CD8-positive, alpha-beta memory T cell (primary cell): ENCODE measurements at regions of chr11 and their contacts with region 1.

Region 1: GRCh38 chr11:119095066-119095880 is 6.4 kb downstream of the DPAGT1 start:
- DNase-seq: peak; percentile 99 to 100 (median 100)
- H3K4me3 ChIP-seq: peak overlapping the region; percentile 88
- H3K4me3 Mint-ChIP-seq: peak overlapping the region; percentile 84 to 97 (median 93)
- H3K27ac ChIP-seq: peak overlapping the region; percentile 84
- H3K27ac Mint-ChIP-seq: peak overlapping the region; percentile 55 to 96 (median 88)
- H3K4me1 ChIP-seq: peaks cover 26% of the 10 kb centered on the region
- H3K4me1 Mint-ChIP-seq: peaks cover 35 to 50% (median 50%) of the 10 kb centered on the region in 3 donors
- H3K27me3 ChIP-seq: no peaks in the 10 kb centered on the region
- H3K27me3 Mint-ChIP-seq: peaks cover 0 to 4% of the 10 kb centered on the region in 2 donors

Region 2: GRCh38 chr11:117907251-117907981 is 1187.9 kb before region 1 on chr11:
- CTCF ChIA-PET with region 1: no interaction called
- POLR2A ChIA-PET with region 1: no interaction called
- DNase-seq: peak; percentile 11 to 67 (median 37)
- H3K4me3 ChIP-seq: peak overlapping the region; percentile 43
- H3K4me3 Mint-ChIP-seq: no peak overlapping the region
- H3K27ac ChIP-seq: peak overlapping the region; percentile 72
- H3K27ac Mint-ChIP-seq: peak overlapping the region in 1 of 8 donors; percentile 75
- H3K4me1 ChIP-seq: no peaks in the 10 kb centered on the region
- H3K4me1 Mint-ChIP-seq: peaks cover 6 to 11% (median 7%) of the 10 kb centered on the region in 3 donors
- H3K27me3 ChIP-seq: no peaks in the 10 kb centered on the region
- H3K27me3 Mint-ChIP-seq: no peaks in the 10 kb centered on the region

Region 3: DNA sequence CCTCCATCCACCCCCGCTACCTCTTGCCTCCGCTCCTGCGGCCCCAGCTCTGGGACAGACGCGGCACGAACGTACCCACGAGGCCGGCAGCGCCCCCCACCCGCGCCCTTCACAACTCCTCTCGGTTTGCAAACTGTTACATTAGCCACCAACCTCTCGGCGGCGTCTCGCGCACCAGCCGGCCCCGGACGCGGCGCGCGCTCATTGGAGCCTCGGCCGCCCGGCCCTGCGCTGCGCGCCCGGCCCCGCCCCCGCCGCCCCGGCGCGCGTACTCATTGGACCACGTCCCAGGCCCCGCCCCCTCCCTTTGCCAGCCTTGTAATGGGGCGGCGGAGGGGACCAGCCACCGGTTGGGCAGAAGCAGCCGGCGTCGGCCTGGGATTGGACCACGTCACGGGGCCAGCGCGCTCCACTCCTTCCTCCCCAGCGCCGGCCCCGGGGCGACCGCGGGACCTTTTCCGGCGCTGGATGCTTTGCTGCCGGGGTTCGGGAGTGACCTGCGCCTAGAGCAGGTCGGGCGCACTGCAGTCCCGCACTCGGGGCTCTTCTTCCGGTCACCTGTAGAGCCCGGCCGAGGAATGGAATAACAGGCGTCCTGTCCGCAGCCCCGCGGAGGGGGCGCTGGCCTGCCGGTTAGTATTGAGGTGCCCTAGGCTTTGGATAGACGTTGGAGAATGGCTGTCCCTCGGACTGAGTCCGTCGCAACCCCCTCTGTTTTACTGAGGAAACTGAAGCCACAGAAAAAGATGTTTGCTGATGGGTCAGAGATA is 38.1 kb before region 1 on chr11 and contains the start of gene HYOU1:
- CTCF ChIA-PET with region 1: interaction called, 3 read pairs
- POLR2A ChIA-PET with region 1: interaction called, 11 read pairs
- DNase-seq: peak; percentile 98 to 99 (median 98)
- H3K4me3 ChIP-seq: peak within 1 kb of the TSS; percentile 84
- H3K4me3 Mint-ChIP-seq: peak within 1 kb of the TSS; percentile 91 to 99 (median 95)
- H3K27ac ChIP-seq: peak within 1 kb of the TSS; percentile 82
- H3K27ac Mint-ChIP-seq: peak within 1 kb of the TSS; percentile 85 to 99 (median 98)
- H3K4me1 ChIP-seq: peaks cover 22% of the 10 kb centered on the region
- H3K4me1 Mint-ChIP-seq: peaks cover 35 to 43% (median 43%) of the 10 kb centered on the region in 3 donors
- H3K27me3 ChIP-seq: no peaks in the 10 kb centered on the region
- H3K27me3 Mint-ChIP-seq: no peaks in the 10 kb centered on the region
- total RNA-seq, gene HYOU1: 181 TPM

Region 4: GRCh38 chr11:119121008-119121810 is 25.9 kb after region 1 on chr11 and contains the start of gene HINFP:
- CTCF ChIA-PET with region 1: interaction called, 7 read pairs
- POLR2A ChIA-PET with region 1: interaction called, 13 read pairs
- DNase-seq: peak; percentile 98 to 100 (median 100)
- H3K4me3 ChIP-seq: peak within 1 kb of the TSS; percentile 91
- H3K4me3 Mint-ChIP-seq: peak within 1 kb of the TSS; percentile 85 to 95 (median 94)
- H3K27ac ChIP-seq: peak within 1 kb of the TSS; percentile 78
- H3K27ac Mint-ChIP-seq: peak within 1 kb of the TSS; percentile 72 to 97 (median 96)
- H3K4me1 ChIP-seq: peaks cover 27% of the 10 kb centered on the region
- H3K4me1 Mint-ChIP-seq: peaks cover 30 to 42% (median 40%) of the 10 kb centered on the region in 3 donors
- H3K27me3 ChIP-seq: no peaks in the 10 kb centered on the region
- H3K27me3 Mint-ChIP-seq: peaks cover 0 to 2% of the 10 kb centered on the region in 2 donors
- total RNA-seq, gene HINFP: 26.8 to 29.1 TPM